ENCODE measurements at regions of chr1 and their contacts with region 1.

Region 1: GRCh38 chr1:197807216-197807615 is 31.9 kb upstream of the DENND1B start:
- DNase-seq: peak; percentile 29
- CTCF ChIP-seq: no peak

Region 2: DNA sequence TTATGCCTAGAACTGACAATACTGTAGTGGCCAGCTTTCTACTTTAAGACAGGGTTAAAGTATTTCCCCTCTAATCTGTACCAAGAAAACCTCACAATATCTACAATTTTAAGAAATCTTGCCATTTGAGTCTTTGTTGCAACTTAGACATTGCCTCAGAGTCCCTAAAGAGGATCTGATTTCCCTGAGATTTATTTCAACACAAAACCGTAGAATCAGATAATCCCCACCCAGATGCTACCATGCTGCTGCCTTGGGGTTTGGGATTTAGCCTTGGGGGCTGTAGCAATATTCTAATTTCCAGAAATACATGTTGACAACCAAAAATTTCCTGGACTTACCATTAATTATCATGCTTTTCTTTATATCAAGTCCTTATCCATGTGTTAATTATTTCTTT is 18.3 kb after region 1 on chr1:
- CTCF ChIA-PET with region 1: interaction called, 21 read pairs
- POLR2A ChIA-PET with region 1: no interaction called
- DNase-seq: no peak
- CTCF ChIP-seq: no peak